Activated naive CD8-positive, alpha-beta T cell treated with anti-CD3 and anti-CD28 coated beads, Interleukin-2, amount 10 ng/mL, durations not matched to agents 7 days and 5 days (primary cell): ENCODE measurements at regions of chr1 and their contacts with region 1.

Region 1: DNA sequence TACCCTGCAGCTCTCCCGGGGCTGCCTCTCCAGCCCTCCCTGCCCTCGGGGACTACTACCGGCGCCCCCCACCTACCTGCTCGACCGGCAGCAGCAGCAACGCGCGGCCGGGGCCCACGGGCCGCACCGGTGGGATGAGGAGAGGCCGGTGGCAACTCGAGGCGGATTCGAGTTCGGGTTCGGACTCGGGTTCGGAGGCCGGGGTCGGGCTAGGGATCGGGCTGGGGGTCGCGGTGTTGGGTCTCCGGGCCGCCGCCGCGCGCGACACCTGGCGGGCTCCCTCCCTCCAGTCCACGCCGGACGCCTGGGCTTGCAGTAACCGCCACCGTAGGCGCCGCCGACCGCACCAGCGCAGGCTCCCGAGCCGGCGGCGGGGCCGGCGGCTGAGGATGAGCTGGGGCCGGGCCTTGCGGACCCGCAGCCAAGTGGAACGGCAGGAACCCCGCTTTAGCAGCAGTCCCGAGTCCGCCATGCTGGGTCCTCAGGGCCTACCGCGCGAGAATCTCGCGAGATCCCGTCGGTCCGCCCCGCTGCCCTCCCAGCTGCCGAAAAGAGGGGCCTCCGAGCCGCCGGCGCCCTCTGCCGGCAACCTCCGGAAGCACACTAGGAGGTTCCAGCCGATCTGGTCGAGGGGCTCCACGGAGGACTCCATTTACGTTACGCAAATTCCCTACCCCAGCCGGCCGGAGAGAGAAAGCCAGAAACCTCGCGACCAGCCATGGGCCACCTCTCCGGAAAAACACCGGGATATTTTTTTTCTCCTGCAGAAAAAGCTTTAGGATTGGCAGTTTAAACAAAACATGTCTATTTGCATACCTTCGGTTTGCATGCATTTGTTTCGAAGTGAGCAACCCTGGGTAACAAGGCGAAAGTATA is at the start of gene NOL9:
- DNase-seq: peak; percentile 98
- ATAC-seq: peak; percentile 97
- H3K4me3 Mint-ChIP-seq: peak within 1 kb of the TSS; percentile 82
- H3K27ac Mint-ChIP-seq: peak within 1 kb of the TSS; percentile 76
- H3K4me1 Mint-ChIP-seq: peaks cover 8% of the 10 kb centered on the region
- H3K27me3 Mint-ChIP-seq: no peaks in the 10 kb centered on the region
- total RNA-seq, gene NOL9: 37.6 to 40.8 TPM

Region 2: DNA sequence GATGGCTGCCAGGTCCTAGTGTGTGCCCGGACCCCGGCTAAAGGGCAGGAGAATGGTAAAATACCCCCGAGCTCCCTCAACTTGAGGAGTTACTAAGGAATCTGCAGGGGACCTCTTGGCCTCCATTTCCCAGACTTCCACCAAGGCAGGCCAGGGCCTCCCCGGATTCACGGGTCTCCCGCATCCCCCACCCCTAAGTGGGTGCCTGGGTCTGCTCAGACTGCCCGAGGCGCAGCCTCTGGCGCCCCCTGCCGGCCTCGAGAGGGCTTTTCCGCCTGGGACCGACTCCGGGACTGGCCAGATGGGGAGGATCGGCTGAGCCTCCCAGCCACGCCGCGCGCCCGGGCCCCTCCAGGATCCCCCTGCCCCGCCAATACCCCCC is 64.5 kb before region 1 on chr1:
- POLR2A ChIA-PET with region 1: interaction called, 11 read pairs
- DNase-seq: peak; percentile 89
- ATAC-seq: peak; percentile 58
- H3K4me3 Mint-ChIP-seq: peak overlapping the region; percentile 79
- H3K27ac Mint-ChIP-seq: peak overlapping the region; percentile 73
- H3K4me1 Mint-ChIP-seq: peaks cover 28% of the 10 kb centered on the region
- H3K27me3 Mint-ChIP-seq: peaks cover 18% of the 10 kb centered on the region

Region 3: GRCh38 chr1:6579374-6580118 is 25.3 kb after region 1 on chr1 and contains the start of gene ZBTB48:
- POLR2A ChIA-PET with region 1: interaction called, 16 read pairs
- DNase-seq: peak; percentile 97
- ATAC-seq: peak; percentile 98
- H3K4me3 Mint-ChIP-seq: peak within 1 kb of the TSS; percentile 97
- H3K27ac Mint-ChIP-seq: peak within 1 kb of the TSS; percentile 98
- H3K4me1 Mint-ChIP-seq: peaks cover 24% of the 10 kb centered on the region
- H3K27me3 Mint-ChIP-seq: peaks cover 2% of the 10 kb centered on the region
- total RNA-seq, gene ZBTB48: 42.7 to 52.9 TPM